ENCODE measurements at regions of chrX and their contacts with region 1.

Region 1: DNA sequence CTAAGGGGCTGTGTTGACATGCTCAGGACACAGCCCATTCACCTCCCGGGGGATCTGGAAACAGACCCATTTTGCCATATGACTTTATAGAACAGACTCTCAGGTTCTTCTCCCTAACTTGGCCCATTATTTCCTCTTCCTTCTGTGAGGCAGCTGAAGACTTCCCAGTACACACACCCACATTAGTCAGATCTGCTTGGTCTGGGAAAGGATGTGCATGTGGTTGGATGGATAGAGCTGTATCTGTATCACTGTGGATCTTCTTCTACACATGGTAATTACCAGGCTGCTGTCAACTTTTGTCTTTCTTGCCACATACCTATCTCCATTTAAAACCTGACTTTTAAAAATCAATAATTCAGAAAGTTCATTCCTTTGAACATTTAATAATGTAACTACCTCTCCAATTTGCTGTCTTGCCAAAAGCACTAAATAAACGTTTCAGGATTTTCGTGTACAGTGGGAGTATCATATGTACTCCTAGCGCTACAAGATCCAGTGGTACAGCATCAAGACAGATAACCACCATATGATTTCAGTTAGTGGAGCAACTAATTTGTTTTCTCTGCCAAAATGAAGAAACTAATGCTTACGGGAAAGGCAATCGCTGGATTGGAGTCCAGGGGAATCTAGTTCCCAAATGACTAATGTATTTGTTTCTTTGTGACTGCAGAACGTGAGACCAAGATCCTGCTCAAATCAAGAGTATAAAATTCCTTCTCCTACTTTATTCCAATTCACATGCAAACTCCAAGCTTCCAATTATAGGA is 134.1 kb upstream of the MAP3K15 start:
- DNase-seq: no peak
- H3K4me3 Mint-ChIP-seq: no peak overlapping the region
- H3K27ac Mint-ChIP-seq: no peak overlapping the region
- H3K4me1 Mint-ChIP-seq: peaks cover 61% of the 10 kb centered on the region
- H3K27me3 Mint-ChIP-seq: no peaks in the 10 kb centered on the region

Region 2: GRCh38 chrX:19544693-19545305 is 104.6 kb before region 1 on chrX:
- CTCF ChIA-PET with region 1: no interaction called
- POLR2A ChIA-PET with region 1: no interaction called
- intact Hi-C with region 1: loop called (anchors 5 kb)
- DNase-seq: peak; percentile 31
- H3K4me3 Mint-ChIP-seq: no peak overlapping the region
- H3K27ac Mint-ChIP-seq: peak overlapping the region; percentile 6
- H3K4me1 Mint-ChIP-seq: peaks cover 30% of the 10 kb centered on the region
- H3K27me3 Mint-ChIP-seq: no peaks in the 10 kb centered on the region